HCT116 (cell line): ENCODE measurements at regions of chr5 and their contacts with region 1.

Region 1: DNA sequence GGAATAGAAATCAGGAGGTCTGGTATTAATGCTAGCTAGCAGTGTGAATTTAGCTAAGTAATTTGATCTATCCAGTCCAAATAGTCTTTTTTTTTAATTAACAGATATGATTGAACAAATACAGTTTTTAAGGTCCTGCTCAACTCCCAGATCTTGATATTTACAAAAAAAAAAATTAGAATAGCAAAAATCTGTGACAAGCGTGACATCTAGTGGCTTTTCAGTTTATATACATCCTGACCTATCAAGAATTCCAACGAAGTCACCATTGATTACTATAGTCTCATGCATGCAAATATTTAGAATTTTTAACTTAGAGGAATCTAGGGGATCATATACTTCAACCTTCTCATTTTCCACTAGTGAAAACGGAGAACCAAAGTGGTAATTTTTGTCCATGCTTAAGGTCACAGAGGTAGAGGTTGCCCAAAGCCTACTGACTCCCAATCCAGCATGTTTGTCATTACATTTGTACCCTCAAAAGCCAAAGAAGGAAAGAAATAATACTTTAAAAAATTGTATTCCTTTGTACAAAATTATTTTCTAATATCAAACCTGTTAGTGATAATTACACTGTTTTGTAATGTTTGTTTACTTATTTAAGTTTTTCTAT is 17.6 kb upstream of the TARS1 start:
- DNase-seq: peak; percentile 23
- ATAC-seq: peak; percentile 74
- H3K4me3 ChIP-seq: no peak overlapping the region
- H3K27ac ChIP-seq: no peak overlapping the region
- H3K4me1 ChIP-seq: no peaks in the 10 kb centered on the region
- H3K27me3 ChIP-seq: no peaks in the 10 kb centered on the region
- CTCF ChIP-seq: peak; percentile 34 to 50 (median 38); a peak in 5 of 6 replicates
- POLR2A ChIP-seq: no peak
- RAD21 ChIP-seq: peak; percentile 63

Region 2: GRCh38 chr5:32589942-32590869 is 832.9 kb before region 1 on chr5:
- CTCF ChIA-PET with region 1: interaction called, 5 read pairs
- POLR2A ChIA-PET with region 1: no interaction called
- RAD21 ChIA-PET with region 1: no interaction called
- intact Hi-C with region 1: loop called (anchors 10 kb)
- DNase-seq: peak; percentile 31
- ATAC-seq: no peak
- H3K4me3 ChIP-seq: no peak overlapping the region
- H3K27ac ChIP-seq: no peak overlapping the region
- H3K4me1 ChIP-seq: peaks cover 3 to 8% of the 10 kb centered on the region in 2 experiments; a peak in 1 of 4 replicates
- H3K27me3 ChIP-seq: no peaks in the 10 kb centered on the region
- CTCF ChIP-seq: peak; percentile 45 to 65 (median 61); a peak in 5 of 6 replicates
- POLR2A ChIP-seq: no peak
- RAD21 ChIP-seq: peak; percentile 67

Region 3: DNA sequence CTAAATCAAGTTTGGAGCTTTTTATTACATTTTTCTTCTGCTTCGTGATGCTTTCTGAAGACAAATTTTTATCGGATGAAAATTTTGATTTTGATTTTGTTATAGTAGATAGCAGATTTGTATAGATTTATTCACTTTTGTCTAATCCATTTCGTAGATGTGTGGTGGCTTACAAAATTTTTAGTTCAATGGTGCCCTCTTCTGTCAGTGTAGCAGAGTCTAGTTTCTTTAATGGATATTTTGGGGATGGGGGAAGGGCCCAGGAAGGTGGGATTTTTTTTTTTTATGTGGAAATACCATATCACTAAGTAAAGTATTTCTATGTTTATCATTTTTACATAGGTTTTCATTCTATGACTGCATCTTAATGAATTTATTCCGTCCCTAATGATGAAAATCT is 242.2 kb before region 1 on chr5:
- CTCF ChIA-PET with region 1: no interaction called
- POLR2A ChIA-PET with region 1: no interaction called
- RAD21 ChIA-PET with region 1: no interaction called
- intact Hi-C with region 1: loop called (anchors 5 kb)
- DNase-seq: peak; percentile 28
- ATAC-seq: no peak
- H3K4me3 ChIP-seq: no peak overlapping the region
- H3K27ac ChIP-seq: no peak overlapping the region
- H3K4me1 ChIP-seq: no peaks in the 10 kb centered on the region
- H3K27me3 ChIP-seq: no peaks in the 10 kb centered on the region
- CTCF ChIP-seq: peak; percentile 36 to 63 (median 59); a peak in 5 of 6 replicates
- POLR2A ChIP-seq: no peak
- RAD21 ChIP-seq: peak; percentile 76

Region 4: GRCh38 chr5:33346534-33346933 is 76.6 kb before region 1 on chr5:
- CTCF ChIA-PET with region 1: no interaction called
- POLR2A ChIA-PET with region 1: no interaction called
- RAD21 ChIA-PET with region 1: no interaction called
- intact Hi-C with region 1: no loop called
- DNase-seq: no peak
- ATAC-seq: no peak
- H3K4me3 ChIP-seq: no peak overlapping the region
- H3K27ac ChIP-seq: no peak overlapping the region
- H3K4me1 ChIP-seq: peaks cover 0 to 7% of the 10 kb centered on the region in 2 experiments; a peak in 2 of 4 replicates
- H3K27me3 ChIP-seq: no peaks in the 10 kb centered on the region
- CTCF ChIP-seq: no peak
- POLR2A ChIP-seq: no peak
- RAD21 ChIP-seq: no peak

Region 5: GRCh38 chr5:33824516-33825195 is 401.5 kb after region 1 on chr5:
- CTCF ChIA-PET with region 1: no interaction called
- POLR2A ChIA-PET with region 1: no interaction called
- RAD21 ChIA-PET with region 1: no interaction called
- intact Hi-C with region 1: no loop called
- DNase-seq: no peak
- ATAC-seq: no peak
- H3K4me3 ChIP-seq: no peak overlapping the region
- H3K27ac ChIP-seq: no peak overlapping the region
- H3K4me1 ChIP-seq: no peaks in the 10 kb centered on the region
- H3K27me3 ChIP-seq: peaks cover 40% of the 10 kb centered on the region
- CTCF ChIP-seq: no peak
- POLR2A ChIP-seq: no peak
- RAD21 ChIP-seq: no peak